Right ventricle myocardium inferior (tissue), 1 donor: ENCODE measurements at regions of chr22 and their contacts with region 1.

Region 1: DNA sequence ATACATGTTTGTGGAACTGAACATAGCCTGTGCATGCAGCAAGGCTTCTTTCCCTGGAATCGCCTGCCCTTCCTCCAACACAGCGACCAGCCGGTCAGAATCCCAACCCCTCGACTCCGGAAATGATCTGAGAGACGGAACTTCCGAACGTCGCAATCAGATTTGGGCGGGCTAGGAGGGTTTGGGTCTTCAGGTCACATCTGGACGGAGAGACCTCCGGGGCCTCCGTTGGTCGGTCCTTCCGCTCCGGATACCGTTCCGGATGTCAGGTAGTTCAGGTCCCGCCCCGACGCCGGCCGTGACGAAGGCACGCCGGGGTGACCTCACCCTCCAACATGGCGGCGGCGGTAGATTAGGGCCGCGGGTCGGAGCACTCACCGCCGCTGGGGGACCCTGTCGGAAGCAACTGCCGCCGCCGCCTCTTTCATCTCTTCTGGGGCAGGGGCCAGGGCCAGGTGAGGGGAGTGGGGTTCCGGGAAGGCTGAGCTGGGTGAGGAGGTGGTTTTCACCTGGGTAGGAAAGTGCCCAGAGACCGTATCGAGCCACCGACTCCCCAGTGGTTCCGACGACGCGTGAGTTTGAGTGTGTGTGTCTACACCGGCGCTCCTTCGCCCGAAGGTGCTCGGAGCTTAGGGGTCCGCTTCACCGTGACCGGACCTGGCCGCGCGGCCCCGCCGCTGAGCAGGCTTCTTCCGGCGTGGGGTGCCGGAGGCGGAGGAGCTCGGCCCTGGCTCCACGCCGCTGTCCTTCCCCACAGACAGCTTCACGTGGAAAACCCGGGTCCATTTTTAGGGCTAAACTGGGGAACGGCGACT is at the start of gene BCL2L13:
- DNase-seq: peak; percentile 97
- ATAC-seq: peak; percentile 98
- total RNA-seq, gene BCL2L13: 95.9 TPM

Region 2: GRCh38 chr22:17443405-17444203 is 195.0 kb before region 1 on chr22:
- intact Hi-C with region 1: no loop called
- DNase-seq: no peak
- ATAC-seq: no peak

Region 3: GRCh38 chr22:17523925-17524324 is 114.7 kb before region 1 on chr22:
- intact Hi-C with region 1: no loop called
- DNase-seq: no peak
- ATAC-seq: no peak

Region 4: GRCh38 chr22:17562906-17563870 is 75.5 kb before region 1 on chr22 and contains the start of gene SLC25A18:
- intact Hi-C with region 1: loop called (anchors 2 kb)
- DNase-seq: peak; percentile 78
- ATAC-seq: peak; percentile 93
- total RNA-seq, gene SLC25A18: 2.1 TPM

Region 5: DNA sequence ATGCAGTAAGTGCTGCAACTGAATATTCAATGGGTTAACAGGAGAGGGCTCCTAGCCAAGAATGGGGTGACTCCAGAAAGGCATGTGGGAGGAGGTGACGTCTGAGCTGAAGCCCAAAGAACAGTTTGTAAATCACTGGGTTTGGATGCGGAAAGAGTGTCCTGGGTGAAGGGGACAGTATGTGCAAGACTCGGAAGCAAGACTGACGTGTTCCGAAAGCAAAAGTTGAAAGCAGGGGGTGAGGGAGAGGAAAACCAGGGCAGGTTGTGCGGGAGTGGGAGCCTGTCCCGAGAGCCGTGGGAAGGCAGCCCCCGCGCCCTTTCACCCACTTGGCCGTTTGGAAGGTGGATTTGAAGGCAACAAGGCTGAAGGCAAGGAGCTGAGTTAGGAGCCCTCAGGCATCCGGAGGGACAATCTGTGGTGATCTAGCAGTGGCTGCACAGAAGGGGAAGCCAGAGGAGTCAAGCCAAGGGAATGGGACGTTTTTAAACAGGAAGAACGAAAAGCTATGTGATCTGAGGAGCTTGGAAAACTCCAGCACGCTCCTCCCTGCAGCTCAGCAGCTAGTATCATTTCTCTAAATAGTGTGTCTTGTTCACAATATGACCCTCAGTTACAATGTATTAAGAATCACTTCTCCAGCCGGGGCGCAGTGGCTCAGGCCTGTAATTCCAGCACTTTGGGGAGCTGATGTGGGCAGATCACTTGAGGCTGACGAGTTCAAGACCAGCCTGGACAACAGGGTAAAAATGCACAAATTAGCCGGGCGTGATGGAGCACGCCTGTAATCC is 67.6 kb before region 1 on chr22:
- intact Hi-C with region 1: loop called (anchors 2 kb)
- DNase-seq: peak; percentile 91
- ATAC-seq: peak; percentile 93

Region 6: DNA sequence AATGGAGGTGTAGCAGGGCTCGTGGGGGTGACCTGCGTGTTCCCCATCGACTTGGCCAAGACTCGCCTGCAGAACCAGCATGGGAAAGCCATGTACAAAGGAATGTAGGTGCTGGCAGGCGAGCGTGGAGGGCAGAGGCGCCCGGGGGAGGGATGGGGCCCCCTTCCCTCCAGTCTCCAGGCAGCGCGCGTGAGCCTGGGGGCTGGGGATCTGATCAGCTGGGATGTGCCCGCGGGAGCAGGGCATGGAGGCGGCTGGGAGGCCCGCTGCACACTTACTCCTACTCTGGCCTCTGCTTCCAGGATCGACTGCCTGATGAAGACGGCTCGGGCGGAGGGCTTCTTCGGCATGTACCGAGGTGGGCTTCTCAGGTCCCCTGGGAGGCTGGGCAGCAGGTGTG is 57.6 kb before region 1 on chr22:
- intact Hi-C with region 1: no loop called
- DNase-seq: no peak
- ATAC-seq: no peak

Region 7: GRCh38 chr22:17891481-17892167 is 253.0 kb after region 1 on chr22:
- intact Hi-C with region 1: no loop called
- DNase-seq: peak; percentile 79
- ATAC-seq: peak; percentile 79